Activated T-helper 2 cell treated with anti-CD3 and anti-CD28 coated beads, Interferon-gamma antibody, Interleukin-2, Interleukin-4, amounts not matched to agents 10 μg/mL and 5 μg/mL and 100 μg/mL, durations not matched to agents 14 hours and 24 hours and 36 hours (primary cell): ENCODE measurements at regions of chr13 and their contacts with region 1.

Region 1: DNA sequence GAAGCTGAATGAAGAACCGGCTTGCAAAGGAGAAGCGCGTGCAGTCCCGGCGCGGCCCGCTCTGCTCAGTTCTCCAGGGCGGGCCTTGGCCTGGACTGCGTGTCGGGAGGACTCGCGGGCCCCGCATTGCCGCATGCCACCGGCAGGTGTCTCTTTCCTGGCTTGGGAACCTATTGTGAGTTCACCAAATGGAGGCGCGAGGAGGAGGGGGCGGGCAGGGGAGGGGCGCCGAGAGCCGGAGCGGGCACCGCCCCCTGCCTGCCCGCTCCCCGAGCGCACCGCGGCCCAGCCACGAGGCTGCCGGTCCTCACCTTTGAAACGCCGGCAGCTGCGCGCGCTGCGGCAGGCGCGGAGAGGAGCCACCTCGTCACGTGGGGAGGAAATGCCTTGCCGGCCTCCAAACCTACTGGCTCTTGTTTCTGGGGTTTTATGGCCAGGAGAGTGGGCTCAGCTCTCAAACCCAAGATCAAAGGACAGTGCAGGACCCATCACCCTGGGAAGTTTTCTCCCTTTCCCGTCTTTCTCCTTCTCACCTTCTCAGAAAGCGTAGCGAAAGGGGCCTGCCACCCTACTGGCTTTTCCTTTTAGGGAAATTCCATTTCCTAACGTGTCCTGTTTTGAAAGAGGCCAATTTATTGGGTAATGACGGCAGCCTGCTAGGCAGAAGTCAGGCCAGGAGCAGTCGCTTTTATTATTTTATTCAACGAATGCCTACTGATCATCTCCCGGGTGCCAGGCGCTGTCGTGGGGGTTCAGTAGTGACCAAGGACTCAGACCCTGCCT is 13.8 kb upstream of the UBE2L5 start:
- DNase-seq: peak; percentile 89
- H3K4me3 Mint-ChIP-seq: no peak overlapping the region
- H3K27ac Mint-ChIP-seq: peak overlapping the region; percentile 40
- H3K4me1 Mint-ChIP-seq: peaks cover 21% of the 10 kb centered on the region
- H3K27me3 Mint-ChIP-seq: no peaks in the 10 kb centered on the region

Region 2: GRCh38 chr13:30395192-30396084 is 13.1 kb before region 1 on chr13:
- intact Hi-C with region 1: loop called (anchors 2 kb)
- DNase-seq: peak; percentile 67
- H3K4me3 Mint-ChIP-seq: peak overlapping the region; percentile 82
- H3K27ac Mint-ChIP-seq: peak overlapping the region; percentile 93
- H3K4me1 Mint-ChIP-seq: peaks cover 35% of the 10 kb centered on the region
- H3K27me3 Mint-ChIP-seq: no peaks in the 10 kb centered on the region

Region 3: DNA sequence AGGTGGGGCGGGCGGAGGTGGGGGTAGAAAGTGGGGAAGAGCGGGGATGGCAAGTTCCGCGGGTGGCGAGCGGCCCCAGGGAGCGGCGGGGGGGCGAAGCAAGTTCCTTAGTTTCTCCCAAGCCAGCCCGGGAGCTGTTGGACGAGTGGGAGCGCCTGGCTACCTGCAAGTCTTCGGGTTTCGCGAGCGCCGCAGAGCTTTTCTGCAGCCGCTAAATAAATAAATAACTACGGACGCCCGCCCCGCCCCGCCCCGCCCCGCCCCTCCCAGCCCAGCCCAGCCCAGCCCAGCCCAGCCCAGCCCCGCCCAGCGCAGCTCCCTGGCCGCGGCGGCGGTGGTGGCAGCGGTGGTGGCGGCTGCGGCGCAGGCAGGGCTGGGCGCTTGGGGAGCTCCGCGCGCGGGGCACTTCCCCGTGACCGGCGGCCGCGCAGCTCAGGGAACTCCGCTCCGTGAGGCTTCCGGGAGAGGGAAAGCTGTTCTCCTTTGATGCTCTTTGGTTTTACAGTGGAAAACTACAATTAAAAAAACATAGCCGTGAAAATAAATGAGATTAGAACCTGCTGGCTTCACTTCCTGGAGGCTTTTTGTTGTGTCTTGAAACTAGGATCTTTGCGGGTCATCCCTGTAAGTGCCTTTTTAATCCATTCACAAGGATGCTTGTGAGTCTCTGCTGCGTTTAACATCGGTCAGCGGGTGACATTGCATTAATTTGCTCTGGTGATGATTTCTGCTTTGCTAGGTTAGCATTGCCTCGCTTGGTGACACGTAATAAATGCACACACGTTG is 13.7 kb after region 1 on chr13 and contains the start of gene UBE2L5:
- intact Hi-C with region 1: loop called (anchors 1 kb)
- DNase-seq: peak; percentile 73
- H3K4me3 Mint-ChIP-seq: peak within 1 kb of the TSS; percentile 86
- H3K27ac Mint-ChIP-seq: peak within 1 kb of the TSS; percentile 76
- H3K4me1 Mint-ChIP-seq: peaks cover 14% of the 10 kb centered on the region
- H3K27me3 Mint-ChIP-seq: no peaks in the 10 kb centered on the region
- total RNA-seq, gene UBE2L5: not detected in 2 replicates

Region 4: DNA sequence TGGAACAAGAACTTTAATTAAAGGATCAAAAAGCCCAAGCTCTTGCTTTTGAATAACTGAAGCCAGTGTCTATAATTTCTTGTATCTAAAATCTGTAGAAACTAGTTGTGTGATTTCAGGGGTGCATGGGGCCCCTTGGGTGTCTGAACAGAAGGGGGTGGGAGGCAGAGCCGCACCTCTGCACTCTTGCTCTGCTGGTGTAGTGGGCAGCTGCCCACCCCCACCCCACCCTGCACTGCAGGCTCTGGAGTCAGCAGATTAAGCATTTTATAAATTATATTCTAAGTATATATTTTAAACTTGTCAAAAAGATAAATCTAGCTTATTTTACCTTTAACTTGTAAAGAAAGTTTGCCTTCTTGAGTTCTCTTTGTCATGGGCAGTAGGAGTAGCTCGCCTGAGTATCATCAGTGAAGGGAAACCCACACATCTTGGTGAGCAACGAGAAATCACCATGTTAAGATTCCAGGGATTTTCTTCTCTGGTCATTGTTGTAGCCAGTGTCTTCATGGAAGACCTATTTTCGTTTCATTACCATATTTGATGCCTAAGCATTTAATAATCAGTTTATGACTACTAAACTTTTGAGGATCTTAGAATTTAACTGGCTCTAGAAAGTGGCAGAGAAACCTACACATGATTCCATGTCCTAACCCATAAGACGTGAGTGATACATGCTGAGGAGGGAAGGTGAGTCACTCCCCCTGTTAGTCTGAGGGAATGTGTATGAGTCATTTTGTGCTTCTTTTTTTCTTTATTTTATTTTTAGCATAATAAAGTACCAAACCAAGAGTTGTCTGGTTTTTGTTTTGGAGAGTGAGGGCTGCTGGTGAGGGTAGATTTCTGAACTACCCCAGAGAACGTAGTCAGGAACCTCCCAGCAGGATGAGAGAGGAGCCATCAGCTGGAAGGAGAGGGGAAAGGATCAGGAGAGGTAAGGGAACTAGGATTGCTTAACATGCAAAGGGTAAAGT is 21.5 kb after region 1 on chr13:
- intact Hi-C with region 1: loop called (anchors 2 kb)
- DNase-seq: no peak
- H3K4me3 Mint-ChIP-seq: peak overlapping the region; percentile 59
- H3K27ac Mint-ChIP-seq: peak overlapping the region; percentile 89
- H3K4me1 Mint-ChIP-seq: peaks cover 28% of the 10 kb centered on the region
- H3K27me3 Mint-ChIP-seq: no peaks in the 10 kb centered on the region